ENCODE measurements at regions of chr22 and their contacts with region 1.

Region 1: GRCh38 chr22:40525249-40525884 is 111.2 kb downstream of the MRTFA start:
- DNase-seq: peak; percentile 73
- H3K4me3 Mint-ChIP-seq: no peak overlapping the region
- H3K27ac Mint-ChIP-seq: no peak overlapping the region
- H3K4me1 Mint-ChIP-seq: peaks cover 23% of the 10 kb centered on the region
- H3K27me3 Mint-ChIP-seq: no peaks in the 10 kb centered on the region

Region 2: GRCh38 chr22:40156001-40156516 is 369.3 kb before region 1 on chr22:
- CTCF ChIA-PET with region 1: no interaction called
- POLR2A ChIA-PET with region 1: no interaction called
- DNase-seq: no peak
- H3K4me3 Mint-ChIP-seq: no peak overlapping the region
- H3K27ac Mint-ChIP-seq: peak overlapping the region; percentile 15
- H3K4me1 Mint-ChIP-seq: peaks cover 10% of the 10 kb centered on the region
- H3K27me3 Mint-ChIP-seq: no peaks in the 10 kb centered on the region

Region 3: DNA sequence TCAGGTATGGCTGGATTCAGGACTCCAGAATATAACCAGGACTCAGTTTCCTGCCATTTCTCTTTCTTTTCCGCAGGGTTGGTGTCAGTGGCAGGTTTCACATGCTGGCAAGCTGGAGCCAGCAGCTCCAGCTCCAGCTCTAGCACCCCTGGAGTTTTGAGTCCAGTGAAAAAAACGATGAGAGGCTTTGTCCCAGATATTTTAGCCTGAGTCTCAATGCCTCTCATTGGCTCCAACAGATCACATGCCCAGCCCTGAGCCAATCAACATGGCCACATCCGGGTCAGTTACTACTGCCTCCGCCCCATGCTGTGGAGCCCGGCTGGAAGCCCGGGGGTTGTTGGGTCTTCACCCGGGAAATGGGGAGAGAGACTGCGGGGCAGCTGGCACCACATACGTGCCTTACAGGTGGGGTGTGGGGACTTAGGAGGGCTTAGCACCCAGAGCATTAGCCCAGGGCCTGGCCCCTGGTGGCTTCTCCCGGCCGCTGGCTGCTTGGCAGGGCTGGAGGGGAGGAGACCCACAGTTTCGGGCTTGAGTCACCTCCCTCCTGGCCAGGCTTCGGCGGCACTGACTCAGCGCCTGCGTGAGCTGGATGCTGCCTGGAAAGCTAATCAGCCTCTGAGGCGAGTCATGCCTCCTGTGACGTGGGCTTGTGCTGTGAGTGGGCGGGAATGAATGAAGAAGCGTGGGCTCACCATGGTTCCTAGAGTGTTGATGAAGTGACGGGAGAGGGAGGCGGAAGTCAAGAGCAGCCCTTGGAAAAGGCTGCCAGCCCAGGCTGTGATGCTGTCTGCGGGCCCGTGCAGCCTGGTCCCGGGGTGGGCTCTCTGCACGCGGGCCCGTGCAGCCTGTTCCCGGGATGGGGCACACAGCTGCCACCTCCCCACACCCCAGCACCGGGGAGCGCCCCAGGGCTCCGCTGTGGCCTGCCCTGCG is 126.5 kb after region 1 on chr22:
- CTCF ChIA-PET with region 1: interaction called, 76 read pairs
- POLR2A ChIA-PET with region 1: no interaction called
- DNase-seq: peak; percentile 87
- H3K4me3 Mint-ChIP-seq: peak overlapping the region; percentile 72
- H3K27ac Mint-ChIP-seq: peak overlapping the region; percentile 83
- H3K4me1 Mint-ChIP-seq: peaks cover 29% of the 10 kb centered on the region
- H3K27me3 Mint-ChIP-seq: no peaks in the 10 kb centered on the region

Measured in activated CD4-positive, alpha-beta memory T cell treated with anti-CD3 and anti-CD28 coated beads, Interleukin-2, amount 10 ng/mL, durations not matched to agents 7 days and 5 days (primary cell).